AG04450 (cell line): ENCODE measurements at regions of chr12 and their contacts with region 1.

Region 1: DNA sequence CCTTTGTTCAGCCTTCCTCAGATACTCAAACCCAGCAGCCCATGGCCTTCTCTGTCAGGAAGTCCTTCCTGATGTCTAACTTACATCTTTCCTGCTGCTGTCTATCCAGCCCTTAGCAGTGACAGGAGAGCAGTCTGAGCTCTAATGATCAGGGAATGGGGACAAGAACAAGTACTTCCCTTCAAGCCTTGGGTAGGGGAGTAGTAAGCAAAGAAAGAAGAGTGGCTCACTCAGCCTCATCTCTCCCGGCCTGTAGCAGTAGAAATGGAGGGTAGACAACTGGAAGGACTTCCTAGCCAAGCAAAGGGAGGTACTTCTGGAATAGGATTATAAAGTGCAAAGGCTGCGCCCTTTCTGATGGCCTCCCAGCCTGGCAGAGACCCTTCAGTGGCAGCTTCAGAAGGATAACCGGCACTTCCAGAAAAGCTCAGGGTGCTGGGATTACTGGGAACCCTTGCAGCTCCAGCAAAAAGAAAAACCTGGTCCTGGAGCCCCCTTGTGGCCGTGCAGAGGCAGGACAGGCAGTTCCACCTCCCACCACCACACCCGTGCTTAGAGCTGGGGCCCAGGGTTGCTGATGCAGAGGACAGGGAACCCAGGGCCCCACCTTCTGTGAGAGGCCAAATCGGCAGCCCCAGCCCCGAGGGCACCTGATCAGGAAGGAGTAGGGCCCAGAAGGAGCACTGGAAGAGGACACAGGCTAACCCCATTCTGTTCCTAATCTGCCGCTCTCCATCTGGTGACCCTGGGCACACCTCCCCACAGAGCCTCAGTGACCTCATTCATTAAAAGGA is 12.4 kb upstream of the SMUG1 start:
- DNase-seq: peak; percentile 48
- H3K4me3 ChIP-seq: no peak overlapping the region
- H3K27ac ChIP-seq: no peak overlapping the region
- H3K27me3 ChIP-seq: peaks cover 33% of the 10 kb centered on the region
- CTCF ChIP-seq: peak; percentile 100

Region 2: DNA sequence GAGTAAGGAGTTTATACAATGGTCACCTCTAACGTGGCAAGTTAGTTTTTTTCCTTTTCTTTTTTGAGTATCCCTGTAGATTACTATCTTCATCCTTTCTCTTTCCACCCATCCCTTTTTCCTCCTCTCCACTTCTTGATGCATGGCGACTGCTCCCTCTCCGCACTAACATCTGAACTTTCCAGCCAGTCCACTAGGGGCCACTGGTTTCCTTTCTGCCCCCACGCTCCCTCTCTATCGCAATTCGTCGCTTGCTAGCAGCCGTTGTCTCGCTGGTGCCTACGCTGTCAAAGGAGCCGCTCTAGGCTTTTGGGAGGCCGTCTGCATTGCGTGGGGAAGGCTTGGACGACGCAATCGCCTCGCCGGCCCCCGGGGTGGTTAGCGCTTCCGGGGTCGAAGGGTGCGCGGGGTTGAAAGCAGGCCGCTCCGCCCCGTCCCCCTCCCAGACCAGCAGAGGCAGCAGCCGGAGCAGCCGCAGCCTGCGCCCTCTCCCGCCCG is 749.5 kb before region 1 on chr12 and contains the start of gene PCBP2:
- CTCF ChIA-PET with region 1: no interaction called
- POLR2A ChIA-PET with region 1: no interaction called
- DNase-seq: peak; percentile 99
- H3K4me3 ChIP-seq: peak within 1 kb of the TSS; percentile 90
- H3K27ac ChIP-seq: peak within 1 kb of the TSS; percentile 94
- H3K27me3 ChIP-seq: no peaks in the 10 kb centered on the region
- CTCF ChIP-seq: peak; percentile 92
- polyA plus RNA-seq, gene PCBP2: 286 and 408 TPM in 2 replicates

Region 3: GRCh38 chr12:53999559-54000104 is 201.6 kb before region 1 on chr12:
- CTCF ChIA-PET with region 1: interaction called, 163 read pairs
- POLR2A ChIA-PET with region 1: no interaction called
- DNase-seq: no peak
- H3K4me3 ChIP-seq: no peak overlapping the region
- H3K27ac ChIP-seq: no peak overlapping the region
- H3K27me3 ChIP-seq: peaks cover 98% of the 10 kb centered on the region
- CTCF ChIP-seq: no peak

Region 4: DNA sequence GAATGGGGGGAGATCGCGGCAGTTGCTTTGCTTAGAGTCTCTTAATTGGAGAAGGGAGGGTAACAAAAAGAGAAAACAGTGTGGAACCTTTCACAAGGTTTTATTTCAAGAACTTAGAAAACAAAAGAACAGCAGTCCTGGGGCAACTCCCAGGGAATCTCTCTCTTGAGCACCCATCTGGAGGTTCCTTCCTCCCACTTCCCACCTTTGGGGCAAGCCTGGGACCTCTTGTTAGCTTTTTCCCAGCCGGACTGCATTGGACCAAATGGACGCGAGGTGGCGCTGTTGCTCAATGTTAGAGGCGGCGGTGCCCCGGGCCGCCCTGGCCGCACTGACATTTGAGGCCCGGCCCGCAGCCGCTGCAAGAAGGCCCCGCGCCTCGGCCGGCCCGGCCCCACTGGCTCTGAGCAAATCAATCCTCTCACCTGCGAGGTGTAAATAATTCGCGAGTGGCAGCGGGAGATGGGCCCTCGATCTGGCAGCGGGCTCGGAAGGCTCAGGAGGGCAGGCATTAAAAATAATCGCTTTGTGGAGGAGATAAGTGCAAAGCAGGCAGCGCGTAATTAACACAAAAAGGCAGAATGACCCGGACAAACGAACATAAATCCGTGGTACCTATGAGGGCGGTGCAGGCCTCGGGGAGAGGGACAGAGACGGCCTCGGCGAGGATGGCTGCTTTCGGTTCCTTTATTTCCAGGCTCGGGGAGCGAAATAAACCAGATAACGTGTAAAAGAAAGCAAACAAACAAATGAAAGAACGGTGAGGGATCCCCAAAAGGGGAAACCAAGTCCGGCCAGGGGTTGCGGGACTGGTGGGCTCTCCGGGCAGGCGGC is 195.1 kb before region 1 on chr12:
- CTCF ChIA-PET with region 1: interaction called, 163 read pairs
- POLR2A ChIA-PET with region 1: interaction called, 3 read pairs
- DNase-seq: peak; percentile 20
- H3K4me3 ChIP-seq: peak overlapping the region; percentile 25
- H3K27ac ChIP-seq: no peak overlapping the region
- H3K27me3 ChIP-seq: peaks cover 95% of the 10 kb centered on the region
- CTCF ChIP-seq: peak; percentile 86

Region 5: GRCh38 chr12:54017878-54018467 is 183.2 kb before region 1 on chr12:
- CTCF ChIA-PET with region 1: interaction called, 12 read pairs
- POLR2A ChIA-PET with region 1: no interaction called
- DNase-seq: no peak
- H3K4me3 ChIP-seq: peak overlapping the region; percentile 40
- H3K27ac ChIP-seq: no peak overlapping the region
- H3K27me3 ChIP-seq: peaks cover 99% of the 10 kb centered on the region
- CTCF ChIP-seq: no peak

Region 6: GRCh38 chr12:54032627-54033100 is 168.5 kb before region 1 on chr12 and contains the start of gene HOXC5:
- CTCF ChIA-PET with region 1: interaction called, 10 read pairs
- POLR2A ChIA-PET with region 1: no interaction called
- DNase-seq: no peak
- H3K4me3 ChIP-seq: no peak within 1 kb of the TSS
- H3K27ac ChIP-seq: no peak within 1 kb of the TSS
- H3K27me3 ChIP-seq: peaks cover 85% of the 10 kb centered on the region
- CTCF ChIP-seq: peak; percentile 75
- polyA plus RNA-seq, gene HOXC5: not detected in 2 replicates

Region 7: DNA sequence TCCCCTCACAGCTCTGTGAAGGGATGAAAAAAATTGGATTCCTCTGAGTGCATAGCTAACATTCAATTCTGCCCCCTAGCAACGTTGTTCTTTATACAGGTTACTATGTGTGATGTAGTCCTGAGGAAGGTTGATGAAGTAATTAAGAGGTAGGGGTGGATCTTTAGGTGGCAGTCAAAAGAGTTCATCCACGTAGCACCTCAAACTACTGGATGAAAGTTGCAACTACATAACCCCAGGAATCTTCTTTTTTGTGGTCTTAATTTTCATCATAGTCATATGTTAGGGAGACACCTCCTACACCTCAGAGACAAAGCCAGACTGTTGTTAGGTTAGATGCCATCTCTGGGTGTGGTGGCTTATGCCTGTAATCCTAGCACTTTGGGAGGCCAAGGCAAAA is 109.9 kb after region 1 on chr12:
- CTCF ChIA-PET with region 1: no interaction called
- POLR2A ChIA-PET with region 1: no interaction called
- DNase-seq: no peak
- H3K4me3 ChIP-seq: no peak overlapping the region
- H3K27ac ChIP-seq: no peak overlapping the region
- H3K27me3 ChIP-seq: peaks cover 9% of the 10 kb centered on the region
- CTCF ChIP-seq: no peak

Region 8: DNA sequence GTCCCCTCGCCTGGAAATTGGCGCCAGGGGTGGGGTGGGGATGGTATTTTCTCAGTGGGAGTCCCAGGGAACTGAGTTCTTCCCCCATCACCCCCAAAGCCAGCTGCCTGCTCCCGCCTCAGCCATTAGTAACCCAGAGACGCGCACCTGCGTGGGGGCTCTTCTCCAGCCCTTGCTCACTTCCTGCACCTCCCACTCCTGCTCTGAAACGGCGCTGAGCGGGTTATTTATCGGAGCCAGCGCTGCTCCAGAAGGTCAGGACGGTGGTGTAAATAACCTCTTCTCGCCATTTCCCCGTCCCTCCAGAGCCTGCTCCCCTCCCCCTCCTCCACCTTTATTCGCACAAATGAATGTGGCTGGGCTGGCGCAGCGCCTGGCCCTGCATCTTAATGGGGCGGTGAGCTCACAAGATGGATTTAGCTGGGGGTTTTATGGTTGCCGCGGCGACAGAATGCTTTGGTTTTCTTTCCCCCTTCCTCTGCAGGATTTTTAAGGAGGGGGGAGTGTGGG is 150.9 kb after region 1 on chr12:
- CTCF ChIA-PET with region 1: no interaction called
- POLR2A ChIA-PET with region 1: no interaction called
- DNase-seq: no peak
- H3K4me3 ChIP-seq: peak overlapping the region; percentile 10; the same call in 1 of the 2 replicates
- H3K27ac ChIP-seq: peak overlapping the region; percentile 89
- H3K27me3 ChIP-seq: no peaks in the 10 kb centered on the region
- CTCF ChIP-seq: no peak